Left colon (tissue), 2 donors: ENCODE measurements at regions of chr7 and their contacts with region 1.

Region 1: GRCh38 chr7:136134503-136134902 is 157.3 kb upstream of the MTPN start:
- DNase-seq: no peak
- ATAC-seq: no peak

Region 2: DNA sequence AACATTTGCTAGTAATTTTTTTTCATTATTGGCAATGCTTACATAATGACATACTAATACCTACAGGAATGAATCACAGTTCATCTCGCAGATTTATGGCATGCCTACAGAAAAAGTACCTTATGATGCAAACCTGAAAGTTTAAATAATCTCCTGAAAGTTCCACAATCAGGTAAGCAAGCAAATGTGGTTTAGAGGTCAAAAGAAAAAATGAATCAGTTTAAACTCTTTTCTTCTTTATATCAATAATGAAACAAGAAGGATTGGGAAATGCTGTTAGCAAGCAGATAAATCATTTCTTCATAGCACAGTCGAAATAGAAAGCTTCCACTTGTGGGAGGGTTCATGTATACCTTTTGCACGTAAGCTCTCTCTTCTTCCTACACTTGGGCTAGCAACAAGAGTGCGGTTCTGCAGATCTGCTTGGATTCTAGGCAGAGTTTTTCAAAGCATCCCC is 103.6 kb before region 1 on chr7:
- intact Hi-C with region 1: loop called in 1 of 2 experiments (anchors 10 kb)
- DNase-seq: no peak
- ATAC-seq: no peak